ENCODE measurements at regions of chr15 and their contacts with region 1.

Region 1: DNA sequence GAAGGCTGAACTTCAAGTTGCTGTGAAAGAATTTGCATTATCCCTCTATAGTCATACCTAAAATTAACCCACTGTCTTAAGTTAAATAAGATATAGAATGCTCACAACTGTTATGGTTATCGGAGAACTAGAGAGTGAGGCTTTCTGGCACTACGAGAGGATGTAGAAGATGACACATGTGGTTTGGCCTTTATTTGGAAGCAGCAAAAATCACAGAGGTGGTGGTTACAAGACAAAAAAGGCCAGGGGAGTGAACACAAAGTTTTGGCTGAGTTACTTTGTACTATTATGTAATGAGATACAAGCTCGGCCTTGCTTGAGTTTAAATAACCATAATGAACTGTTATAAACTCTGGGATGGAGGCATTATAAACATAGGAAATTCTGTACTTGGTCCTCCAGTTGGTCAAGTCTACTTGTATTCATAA is 78.3 kb upstream of the ICE2 start:
- DNase-seq: peak in 5 of 9 donors; percentile 36 to 56 (median 51)
- ATAC-seq: peak; percentile 73
- H3K4me3 ChIP-seq: no peak overlapping the region
- H3K4me3 Mint-ChIP-seq: peak overlapping the region; percentile 2 to 67 (median 48)
- H3K27ac ChIP-seq: peak overlapping the region; percentile 51
- H3K27ac Mint-ChIP-seq: peak overlapping the region; percentile 26 to 87 (median 77)
- H3K4me1 ChIP-seq: peaks cover 21 to 48% of the 10 kb centered on the region in 2 donors
- H3K4me1 Mint-ChIP-seq: peaks cover 52 to 83% (median 79%) of the 10 kb centered on the region in 7 donors
- H3K27me3 ChIP-seq: no peaks in the 10 kb centered on the region
- H3K27me3 Mint-ChIP-seq: no peaks in the 10 kb centered on the region

Region 2: GRCh38 chr15:59315914-59316451 is 1241.2 kb before region 1 on chr15:
- CTCF ChIA-PET with region 1: no interaction called
- POLR2A ChIA-PET with region 1: no interaction called
- intact Hi-C with region 1: no loop called
- DNase-seq: no peak
- ATAC-seq: no peak
- H3K4me3 ChIP-seq: no peak overlapping the region
- H3K4me3 Mint-ChIP-seq: no peak overlapping the region
- H3K27ac ChIP-seq: no peak overlapping the region
- H3K27ac Mint-ChIP-seq: no peak overlapping the region
- H3K4me1 ChIP-seq: no peaks in the 10 kb centered on the region
- H3K4me1 Mint-ChIP-seq: peaks cover 0 to 14% (median 0%) of the 10 kb centered on the region in 7 donors
- H3K27me3 ChIP-seq: no peaks in the 10 kb centered on the region
- H3K27me3 Mint-ChIP-seq: peaks cover 0 to 20% (median 6%) of the 10 kb centered on the region in 5 donors

Region 3: DNA sequence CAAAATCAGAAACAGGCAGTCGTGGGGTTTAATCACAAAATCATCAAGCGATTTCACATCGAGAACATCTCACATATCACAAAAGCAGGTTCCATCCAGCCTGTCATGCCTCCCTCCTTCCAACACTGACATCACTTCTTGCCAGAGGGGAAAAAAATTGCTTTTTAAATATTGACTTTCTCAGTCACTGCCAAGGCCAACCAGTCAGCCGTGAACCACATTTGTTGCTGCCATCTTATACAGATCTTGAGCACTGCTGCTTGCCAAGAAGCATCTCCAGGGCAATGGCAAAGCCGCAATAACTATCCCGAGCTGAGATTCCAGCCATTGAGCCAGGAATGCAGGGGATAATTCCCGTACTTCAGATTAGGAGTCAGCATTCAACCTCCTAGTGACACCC is 334.0 kb before region 1 on chr15:
- CTCF ChIA-PET with region 1: no interaction called
- POLR2A ChIA-PET with region 1: no interaction called
- intact Hi-C with region 1: no loop called
- DNase-seq: no peak
- ATAC-seq: no peak
- H3K4me3 ChIP-seq: no peak overlapping the region
- H3K4me3 Mint-ChIP-seq: no peak overlapping the region
- H3K27ac ChIP-seq: no peak overlapping the region
- H3K27ac Mint-ChIP-seq: no peak overlapping the region
- H3K4me1 ChIP-seq: no peaks in the 10 kb centered on the region
- H3K4me1 Mint-ChIP-seq: no peaks in the 10 kb centered on the region
- H3K27me3 ChIP-seq: no peaks in the 10 kb centered on the region
- H3K27me3 Mint-ChIP-seq: peaks cover 0 to 52% (median 0%) of the 10 kb centered on the region in 5 donors

Region 4: DNA sequence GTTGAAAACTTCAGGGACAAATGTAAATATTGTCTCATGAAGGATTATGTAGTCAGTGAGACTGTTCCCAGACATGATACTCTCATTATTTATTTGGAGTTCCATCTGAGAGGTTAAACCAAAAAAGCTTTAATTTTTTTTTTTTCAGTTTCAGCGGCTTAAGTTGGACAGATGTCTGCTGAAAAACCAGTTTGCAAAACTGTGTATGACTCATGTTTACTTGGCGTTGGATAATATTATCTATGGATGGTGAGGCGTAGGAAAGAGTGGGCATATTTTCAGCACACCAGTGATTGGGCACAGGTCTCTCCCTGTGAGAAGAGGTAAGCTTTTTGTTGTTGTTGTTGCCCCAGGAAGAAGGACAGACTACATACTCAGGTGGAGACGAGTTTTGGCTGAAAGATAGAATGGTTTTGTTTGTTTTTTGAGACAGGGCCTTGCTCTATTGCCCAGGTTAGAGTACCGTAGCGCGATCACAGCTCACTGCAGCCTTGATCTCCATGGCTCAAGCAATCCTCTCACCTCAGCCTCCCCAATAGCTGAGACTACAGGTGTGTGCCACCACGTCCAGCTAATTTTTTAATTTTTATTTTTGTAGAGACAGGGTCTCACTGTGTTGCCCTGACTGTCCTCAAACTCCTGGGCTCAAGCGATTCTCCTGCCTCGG is 143.1 kb before region 1 on chr15:
- CTCF ChIA-PET with region 1: no interaction called
- POLR2A ChIA-PET with region 1: no interaction called
- intact Hi-C with region 1: no loop called
- DNase-seq: no peak
- ATAC-seq: no peak
- H3K4me3 ChIP-seq: no peak overlapping the region
- H3K4me3 Mint-ChIP-seq: no peak overlapping the region
- H3K27ac ChIP-seq: no peak overlapping the region
- H3K27ac Mint-ChIP-seq: no peak overlapping the region
- H3K4me1 ChIP-seq: peaks cover 0 to 3% of the 10 kb centered on the region in 2 donors
- H3K4me1 Mint-ChIP-seq: peaks cover 0 to 2% (median 0%) of the 10 kb centered on the region in 7 donors
- H3K27me3 ChIP-seq: no peaks in the 10 kb centered on the region
- H3K27me3 Mint-ChIP-seq: no peaks in the 10 kb centered on the region

Region 5: DNA sequence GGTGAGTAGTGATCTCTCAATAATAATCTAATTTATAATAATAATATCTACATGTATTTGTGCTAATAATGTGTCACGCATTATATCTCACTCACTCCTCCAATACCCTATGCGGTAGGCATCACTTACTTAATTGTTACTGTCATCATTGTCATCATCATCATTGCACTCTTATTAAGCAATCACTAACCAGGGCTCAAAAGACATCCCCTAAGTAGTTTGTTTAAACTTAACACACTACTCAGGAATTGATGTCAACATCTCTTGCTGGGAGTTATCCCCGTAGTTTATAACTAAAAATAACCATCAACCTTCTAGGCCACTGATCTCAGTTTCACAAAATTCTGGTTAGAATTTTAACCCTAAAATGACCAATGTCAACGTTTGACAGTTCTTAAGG is 21.5 kb before region 1 on chr15:
- CTCF ChIA-PET with region 1: interaction called, 3 read pairs
- POLR2A ChIA-PET with region 1: interaction called, 3 read pairs
- intact Hi-C with region 1: loop called in 1 of 2 experiments (anchors 2 kb)
- DNase-seq: no peak
- ATAC-seq: no peak
- H3K4me3 ChIP-seq: no peak overlapping the region
- H3K4me3 Mint-ChIP-seq: peak overlapping the region in 1 of 10 donors; percentile 17
- H3K27ac ChIP-seq: no peak overlapping the region
- H3K27ac Mint-ChIP-seq: peak overlapping the region in 3 of 9 donors; percentile 8 to 72 (median 11)
- H3K4me1 ChIP-seq: peaks cover 35 to 49% of the 10 kb centered on the region in 2 donors
- H3K4me1 Mint-ChIP-seq: peaks cover 55 to 98% (median 92%) of the 10 kb centered on the region in 7 donors
- H3K27me3 ChIP-seq: no peaks in the 10 kb centered on the region
- H3K27me3 Mint-ChIP-seq: no peaks in the 10 kb centered on the region

Region 6: GRCh38 chr15:60568301-60568742 is 11.1 kb after region 1 on chr15:
- CTCF ChIA-PET with region 1: interaction called, 9 read pairs
- POLR2A ChIA-PET with region 1: no interaction called
- intact Hi-C with region 1: loop called in 1 of 2 experiments (anchors 1 kb)
- DNase-seq: no peak
- ATAC-seq: no peak
- H3K4me3 ChIP-seq: no peak overlapping the region
- H3K4me3 Mint-ChIP-seq: peak overlapping the region; percentile 7 to 78 (median 62)
- H3K27ac ChIP-seq: no peak overlapping the region
- H3K27ac Mint-ChIP-seq: peak overlapping the region in 8 of 9 donors; percentile 65 to 89 (median 78)
- H3K4me1 ChIP-seq: peaks cover 80% of the 10 kb centered on the region in 2 donors
- H3K4me1 Mint-ChIP-seq: peaks cover 66 to 99% (median 93%) of the 10 kb centered on the region in 7 donors
- H3K27me3 ChIP-seq: no peaks in the 10 kb centered on the region
- H3K27me3 Mint-ChIP-seq: no peaks in the 10 kb centered on the region

Region 7: DNA sequence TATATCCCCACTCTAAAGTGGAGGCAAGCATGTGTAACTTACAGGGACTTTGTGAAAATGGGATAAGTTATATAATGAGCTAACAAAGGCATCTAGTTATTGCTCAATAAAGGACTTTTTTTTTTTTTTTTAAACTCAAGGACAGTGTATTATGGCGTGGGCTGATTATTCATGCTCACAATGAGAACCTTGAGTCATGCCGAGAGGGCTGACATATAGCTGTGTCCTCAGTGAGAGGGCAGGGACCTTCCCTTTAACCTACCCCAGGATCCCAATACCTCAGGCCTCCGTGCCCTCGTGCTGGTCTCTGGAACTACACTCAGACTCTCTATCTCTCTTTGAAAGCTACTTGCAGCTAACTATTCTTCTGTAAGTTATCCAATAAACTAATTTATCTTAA is 241.6 kb after region 1 on chr15:
- CTCF ChIA-PET with region 1: no interaction called
- POLR2A ChIA-PET with region 1: no interaction called
- intact Hi-C with region 1: no loop called
- DNase-seq: peak in 1 of 9 donors; percentile 48
- ATAC-seq: peak; percentile 36
- H3K4me3 ChIP-seq: no peak overlapping the region
- H3K4me3 Mint-ChIP-seq: peak overlapping the region in 1 of 10 donors; percentile 18
- H3K27ac ChIP-seq: no peak overlapping the region
- H3K27ac Mint-ChIP-seq: peak overlapping the region in 2 of 9 donors; percentile 20 to 36
- H3K4me1 ChIP-seq: peaks cover 36 to 37% of the 10 kb centered on the region in 2 donors
- H3K4me1 Mint-ChIP-seq: peaks cover 29 to 71% (median 50%) of the 10 kb centered on the region in 7 donors
- H3K27me3 ChIP-seq: no peaks in the 10 kb centered on the region
- H3K27me3 Mint-ChIP-seq: no peaks in the 10 kb centered on the region